CD8-positive, alpha-beta memory T cell (primary cell): ENCODE measurements at regions of chr15 and their contacts with region 1.

Region 1: GRCh38 chr15:72199711-72200212 is 2.2 kb upstream of the GRAMD2A start:
- DNase-seq: peak; percentile 49 to 83 (median 59)
- H3K4me3 ChIP-seq: no peak overlapping the region
- H3K4me3 Mint-ChIP-seq: no peak overlapping the region
- H3K27ac ChIP-seq: no peak overlapping the region
- H3K27ac Mint-ChIP-seq: peak overlapping the region in 2 of 8 donors; percentile 23 to 50
- H3K4me1 ChIP-seq: no peaks in the 10 kb centered on the region
- H3K4me1 Mint-ChIP-seq: peaks cover 0 to 17% (median 5%) of the 10 kb centered on the region in 3 donors
- H3K27me3 ChIP-seq: peaks cover 8% of the 10 kb centered on the region
- H3K27me3 Mint-ChIP-seq: peaks cover 15 to 18% of the 10 kb centered on the region in 2 donors

Region 2: GRCh38 chr15:72237286-72238224 is 37.8 kb after region 1 on chr15:
- CTCF ChIA-PET with region 1: interaction called, 11 read pairs
- POLR2A ChIA-PET with region 1: no interaction called
- DNase-seq: peak in 2 of 5 donors; percentile 6 to 56
- H3K4me3 ChIP-seq: no peak overlapping the region
- H3K4me3 Mint-ChIP-seq: peak overlapping the region in 2 of 7 donors; percentile 23 to 32
- H3K27ac ChIP-seq: peak overlapping the region; percentile 64
- H3K27ac Mint-ChIP-seq: peak overlapping the region; percentile 54 to 96 (median 76)
- H3K4me1 ChIP-seq: peaks cover 14% of the 10 kb centered on the region
- H3K4me1 Mint-ChIP-seq: peaks cover 18 to 24% (median 23%) of the 10 kb centered on the region in 3 donors
- H3K27me3 ChIP-seq: no peaks in the 10 kb centered on the region
- H3K27me3 Mint-ChIP-seq: no peaks in the 10 kb centered on the region

Region 3: DNA sequence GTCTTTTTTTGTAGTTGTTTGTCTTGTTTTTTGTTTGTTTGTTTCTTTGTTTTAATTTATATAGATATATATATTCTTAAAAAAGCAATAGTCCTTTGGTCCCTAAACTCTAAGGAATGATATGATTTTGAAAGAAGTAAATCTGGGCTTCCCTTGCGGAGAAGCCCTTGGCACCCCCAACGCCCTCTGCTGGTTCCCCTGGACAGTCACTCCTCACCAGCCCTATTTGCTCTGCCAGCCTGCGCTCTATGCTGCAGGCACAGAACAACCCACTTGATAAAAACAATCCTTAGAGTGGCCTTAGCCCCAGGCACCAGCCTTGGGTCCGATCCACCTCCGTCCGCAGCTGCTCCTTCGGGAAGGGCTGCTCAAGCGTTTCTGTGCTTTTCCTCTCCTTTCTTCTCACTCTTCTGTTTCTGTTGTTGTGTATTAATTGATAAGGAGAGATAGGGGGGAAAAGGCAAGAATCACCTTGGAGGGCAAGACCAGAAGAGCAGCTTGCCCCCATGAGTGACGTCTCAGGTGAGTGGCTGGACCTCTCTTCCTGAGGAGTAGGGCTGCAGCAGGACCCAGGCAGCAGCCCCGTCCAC is 86.3 kb after region 1 on chr15:
- CTCF ChIA-PET with region 1: interaction called, 28 read pairs
- POLR2A ChIA-PET with region 1: no interaction called
- DNase-seq: peak; percentile 15 to 57 (median 29)
- H3K4me3 ChIP-seq: no peak overlapping the region
- H3K4me3 Mint-ChIP-seq: no peak overlapping the region
- H3K27ac ChIP-seq: no peak overlapping the region
- H3K27ac Mint-ChIP-seq: peak overlapping the region in 1 of 8 donors; percentile 41
- H3K4me1 ChIP-seq: no peaks in the 10 kb centered on the region
- H3K4me1 Mint-ChIP-seq: no peaks in the 10 kb centered on the region
- H3K27me3 ChIP-seq: no peaks in the 10 kb centered on the region
- H3K27me3 Mint-ChIP-seq: no peaks in the 10 kb centered on the region